Tibial artery (tissue), 4 donors: ENCODE measurements at regions of chr9 and their contacts with region 1.

Region 1: DNA sequence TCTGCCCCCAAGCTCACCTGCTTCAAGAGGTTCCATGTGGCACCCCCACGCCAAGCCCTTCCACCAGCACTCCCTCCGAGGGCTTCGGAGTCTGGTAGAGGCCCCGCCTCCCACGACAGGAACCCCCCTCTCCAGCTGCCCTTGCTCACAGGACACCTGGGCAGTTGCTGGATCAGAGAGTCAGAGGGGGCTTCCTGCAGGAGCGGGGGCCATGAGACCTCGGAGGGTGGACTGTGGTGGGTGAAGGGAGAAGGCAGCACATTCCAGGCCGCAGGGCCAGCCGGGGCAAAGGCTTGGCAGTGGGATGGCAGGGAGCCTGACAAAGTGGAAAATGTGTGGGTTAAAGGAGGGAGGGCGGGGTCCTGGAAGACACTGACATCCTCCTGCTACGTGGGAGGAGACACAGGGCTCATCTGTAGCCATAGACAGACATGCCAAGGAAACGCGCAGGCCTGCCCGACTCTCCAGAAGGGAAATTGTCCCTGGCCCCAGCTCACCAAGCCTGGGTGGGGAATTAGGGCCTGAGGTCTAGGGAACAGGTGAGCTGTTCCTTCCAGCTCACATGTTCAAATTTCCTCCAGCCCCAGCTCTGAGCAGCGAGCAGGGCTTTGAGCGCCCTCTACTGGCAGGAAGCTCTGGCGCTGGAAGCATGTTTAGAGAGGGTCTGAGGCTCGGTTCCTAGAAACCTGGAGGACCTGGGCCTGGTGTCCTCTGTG is 74.2 kb downstream of the NTNG2 start:
- DNase-seq: peak in 1 of 2 donors; percentile 69
- H3K4me3 ChIP-seq: no peak overlapping the region
- H3K27ac ChIP-seq: no peak overlapping the region
- H3K4me1 ChIP-seq: peaks cover 0 to 12% (median 8%) of the 10 kb centered on the region in 4 donors
- H3K27me3 ChIP-seq: peaks cover 0 to 47% of the 10 kb centered on the region in 2 donors
- CTCF ChIP-seq: peak; percentile 73 to 90

Region 2: DNA sequence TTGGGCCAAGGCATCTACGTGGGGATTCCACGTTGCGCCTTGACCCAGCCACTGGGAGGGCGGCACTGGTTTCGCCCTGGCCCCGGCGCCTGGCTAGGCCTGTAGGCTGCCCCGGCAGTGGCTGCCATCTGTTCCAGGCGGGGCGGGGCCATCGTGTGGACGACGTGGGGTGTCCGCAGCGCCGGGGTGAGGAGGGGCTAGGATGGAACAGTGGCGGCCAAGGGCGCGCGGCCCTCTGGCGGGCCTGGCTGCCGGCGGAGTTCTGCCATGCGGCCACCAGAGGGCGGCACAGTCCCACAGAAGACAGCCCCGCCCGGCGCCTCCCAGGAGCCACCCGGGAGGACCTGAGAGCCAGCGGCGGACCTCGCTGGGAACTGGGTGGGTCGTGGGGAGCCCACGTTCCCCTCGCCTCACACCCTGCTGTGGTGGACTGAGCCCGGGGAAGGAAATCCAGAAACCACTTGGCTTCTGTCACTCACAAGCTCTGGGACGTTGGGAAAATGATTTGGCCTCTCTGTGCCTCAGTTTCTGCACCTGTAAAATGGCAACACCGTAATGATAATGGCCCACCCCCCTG is 473.7 kb before region 1 on chr9:
- intact Hi-C with region 1: loop called (anchors 5 kb)
- DNase-seq: peak; percentile 57 to 79
- H3K4me3 ChIP-seq: no peak overlapping the region
- H3K27ac ChIP-seq: no peak overlapping the region
- H3K4me1 ChIP-seq: peaks cover 0 to 6% (median 3%) of the 10 kb centered on the region in 4 donors
- H3K27me3 ChIP-seq: peaks cover 0 to 25% of the 10 kb centered on the region in 2 donors
- CTCF ChIP-seq: peak; percentile 95 to 96

Region 3: DNA sequence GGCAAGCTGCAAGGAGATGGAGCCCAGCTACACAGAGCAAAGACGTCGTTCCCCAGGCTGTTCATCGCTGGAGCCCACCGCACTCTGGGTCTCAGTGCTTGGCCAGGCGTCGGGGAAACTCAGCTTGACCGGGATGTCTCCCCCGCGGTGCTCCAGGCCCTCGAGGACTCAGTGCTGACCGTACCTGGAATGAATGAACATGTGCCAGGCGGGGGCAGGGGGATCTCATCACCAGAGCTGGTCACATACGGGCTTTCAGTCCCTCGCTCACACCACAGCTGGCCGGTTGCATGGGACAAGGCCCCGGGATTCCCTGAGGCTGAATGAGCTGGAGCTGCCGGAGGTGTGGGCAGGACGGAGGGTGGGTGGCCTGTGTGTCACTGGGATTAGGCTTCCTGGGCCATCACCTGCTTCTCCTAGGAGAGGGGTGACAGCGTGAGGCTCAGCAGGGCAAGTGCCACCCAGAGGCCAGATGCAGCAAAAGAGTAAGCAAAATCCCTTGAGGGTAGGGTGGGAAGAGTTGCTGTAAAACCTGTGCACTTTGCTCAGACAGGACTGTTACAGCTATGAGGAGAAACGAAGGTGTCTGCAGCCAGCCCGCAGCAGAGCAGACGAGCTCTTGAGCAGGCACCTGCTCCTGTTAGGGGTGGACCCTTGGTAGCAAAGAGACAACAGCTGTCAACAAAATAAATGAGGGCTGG is 425.6 kb before region 1 on chr9:
- intact Hi-C with region 1: no loop called
- DNase-seq: no peak
- H3K4me3 ChIP-seq: no peak overlapping the region
- H3K27ac ChIP-seq: no peak overlapping the region
- H3K4me1 ChIP-seq: no peaks in the 10 kb centered on the region
- H3K27me3 ChIP-seq: peaks cover 0 to 94% of the 10 kb centered on the region in 2 donors
- CTCF ChIP-seq: no peak

Region 4: GRCh38 chr9:132069046-132069898 is 166.8 kb before region 1 on chr9:
- intact Hi-C with region 1: no loop called
- DNase-seq: no peak
- H3K4me3 ChIP-seq: no peak overlapping the region
- H3K27ac ChIP-seq: no peak overlapping the region
- H3K4me1 ChIP-seq: peaks cover 0 to 45% (median 24%) of the 10 kb centered on the region in 4 donors
- H3K27me3 ChIP-seq: no peaks in the 10 kb centered on the region
- CTCF ChIP-seq: no peak

Region 5: GRCh38 chr9:132169672-132170392 is 66.3 kb before region 1 on chr9:
- intact Hi-C with region 1: loop called (anchors 5 kb)
- DNase-seq: no peak
- H3K4me3 ChIP-seq: no peak overlapping the region
- H3K27ac ChIP-seq: no peak overlapping the region
- H3K4me1 ChIP-seq: peaks cover 0 to 7% (median under 1%) of the 10 kb centered on the region in 4 donors
- H3K27me3 ChIP-seq: peaks cover 0 to 84% of the 10 kb centered on the region in 2 donors
- CTCF ChIP-seq: peak; percentile 47 to 58